ENCODE measurements at regions of chr12 and their contacts with region 1.

Region 1: GRCh38 chr12:105420659-105421240 is 90.3 kb downstream of the C12orf75 start:
- DNase-seq: peak; percentile 84
- H3K4me3 ChIP-seq: no peak overlapping the region
- H3K27ac ChIP-seq: no peak overlapping the region
- H3K4me1 ChIP-seq: peaks cover 6% of the 10 kb centered on the region
- H3K27me3 ChIP-seq: no peaks in the 10 kb centered on the region
- CTCF ChIP-seq: peak; percentile 82 to 94 (median 83)
- POLR2A ChIP-seq: no peak

Region 2: GRCh38 chr12:105393587-105393986 is 27.2 kb before region 1 on chr12:
- intact Hi-C with region 1: no loop called
- DNase-seq: no peak
- H3K4me3 ChIP-seq: no peak overlapping the region
- H3K27ac ChIP-seq: no peak overlapping the region
- H3K4me1 ChIP-seq: no peaks in the 10 kb centered on the region
- H3K27me3 ChIP-seq: no peaks in the 10 kb centered on the region
- CTCF ChIP-seq: no peak
- POLR2A ChIP-seq: no peak

Region 3: GRCh38 chr12:106136263-106136662 is 715.5 kb after region 1 on chr12:
- intact Hi-C with region 1: loop called (anchors 5 kb)
- DNase-seq: peak; percentile 94
- H3K4me3 ChIP-seq: no peak overlapping the region
- H3K27ac ChIP-seq: peak overlapping the region in 1 of 2 donors; percentile 27
- H3K4me1 ChIP-seq: no peaks in the 10 kb centered on the region
- H3K27me3 ChIP-seq: no peaks in the 10 kb centered on the region
- CTCF ChIP-seq: peak; percentile 86 to 92 (median 90)
- POLR2A ChIP-seq: no peak

Measured in testis (tissue), 5 donors.